ENCODE measurements at regions of chr11 and their contacts with region 1.

Region 1: GRCh38 chr11:79160791-79161403 is 279.9 kb downstream of the TENM4 start:
- DNase-seq: peak; percentile 81
- ATAC-seq: peak; percentile 77
- H3K4me3 ChIP-seq: no peak overlapping the region
- H3K27ac ChIP-seq: no peak overlapping the region
- H3K4me1 ChIP-seq: peaks cover 6% of the 10 kb centered on the region
- H3K27me3 ChIP-seq: peaks cover 3% of the 10 kb centered on the region; the same call in 1 of the 2 replicates
- CTCF ChIP-seq: peak; percentile 85

Region 2: DNA sequence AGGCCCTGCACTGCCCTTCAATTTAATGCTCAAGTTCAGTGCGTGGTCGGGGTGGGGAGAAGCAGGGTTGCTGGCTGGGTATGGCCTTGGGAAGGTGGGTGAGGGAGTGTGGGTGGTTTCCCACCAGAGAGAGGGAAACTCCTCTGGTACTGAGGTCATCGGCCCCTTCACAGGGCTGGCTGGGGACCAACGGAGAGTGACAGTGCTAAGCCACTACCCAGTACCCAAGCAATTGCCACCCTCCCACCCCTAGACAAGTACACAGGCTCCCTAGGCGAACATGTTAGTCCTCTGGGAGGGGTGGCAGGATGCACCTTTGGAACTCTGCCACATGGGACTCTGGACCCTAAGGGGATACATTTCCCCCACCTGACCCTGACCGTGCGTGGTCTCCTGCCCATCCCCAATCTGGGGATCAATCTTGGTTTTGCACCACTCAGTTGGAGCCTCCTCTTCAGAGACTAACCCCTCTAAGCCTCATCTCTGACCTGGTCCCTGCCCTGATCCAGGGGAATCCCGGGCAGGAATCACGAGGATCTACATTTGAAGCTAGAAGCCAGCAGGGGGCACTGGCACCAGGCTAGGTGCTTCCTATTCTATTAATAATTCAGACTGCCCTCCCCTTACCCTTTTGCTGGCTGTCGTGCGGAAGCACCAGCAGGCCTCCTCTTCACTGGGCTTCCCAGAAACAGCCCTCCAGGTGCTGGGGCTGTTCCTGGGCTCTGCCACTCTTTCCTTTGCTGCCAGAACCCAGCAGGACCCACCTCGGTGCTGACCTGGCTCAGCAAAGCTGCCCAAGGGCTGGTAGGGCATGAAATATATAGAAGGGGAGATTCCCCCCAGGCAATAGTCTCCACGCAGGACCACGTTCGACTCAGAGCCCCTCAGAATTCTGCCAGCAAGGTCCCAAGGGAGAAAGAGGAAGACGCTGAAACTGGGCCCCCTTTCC is 97.8 kb before region 1 on chr11:
- CTCF ChIA-PET with region 1: no interaction called
- POLR2A ChIA-PET with region 1: no interaction called
- intact Hi-C with region 1: loop called (anchors 5 kb)
- DNase-seq: peak; percentile 63
- ATAC-seq: peak; percentile 64
- H3K4me3 ChIP-seq: no peak overlapping the region
- H3K27ac ChIP-seq: no peak overlapping the region
- H3K4me1 ChIP-seq: no peaks in the 10 kb centered on the region; the same call in 1 of the 2 replicates
- H3K27me3 ChIP-seq: no peaks in the 10 kb centered on the region
- CTCF ChIP-seq: peak; percentile 80